Esophagus muscularis mucosa (tissue), 4 donors: ENCODE measurements at regions of chr3 and their contacts with region 1.

Region 1: DNA sequence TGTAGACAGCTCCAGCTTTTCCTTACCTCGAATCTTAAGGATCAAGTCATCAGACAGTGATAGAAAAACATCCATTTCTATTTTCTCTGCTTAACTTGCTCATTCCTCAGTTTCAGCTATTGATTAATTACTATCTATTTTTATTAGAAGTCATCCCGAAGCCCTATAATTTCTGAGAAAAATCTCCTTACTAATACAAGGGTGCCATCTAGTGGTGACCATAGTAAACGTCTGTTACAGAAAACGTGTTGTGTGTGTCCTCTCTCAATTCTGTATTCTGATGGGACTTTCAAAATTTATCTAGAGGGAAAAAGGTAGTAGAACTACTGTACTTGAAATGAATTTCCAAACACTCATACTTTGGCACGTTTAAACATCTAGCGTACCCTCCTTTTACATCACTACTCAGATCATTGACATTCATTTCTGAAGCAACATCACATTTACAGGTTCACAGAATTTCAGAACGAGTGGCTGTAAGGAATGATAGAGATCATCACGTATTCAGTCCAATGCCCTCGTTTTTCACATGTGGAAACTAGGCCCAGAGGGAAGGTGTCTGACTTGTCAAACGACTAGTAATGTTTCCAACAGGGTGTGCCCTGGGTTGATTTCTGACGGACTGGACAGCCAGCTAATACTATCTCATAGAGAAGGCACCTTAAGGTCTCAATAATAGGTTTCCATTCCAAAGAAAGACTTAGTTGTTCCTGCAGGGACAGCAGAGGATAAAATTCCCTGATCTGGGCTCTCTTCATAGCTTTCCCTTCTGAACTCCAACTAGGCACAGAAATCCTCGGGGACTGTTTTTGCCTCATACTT is 25.6 kb downstream of the HACD2 start:
- DNase-seq: no peak
- H3K4me3 ChIP-seq: no peak overlapping the region
- H3K27ac ChIP-seq: no peak overlapping the region
- H3K4me1 ChIP-seq: peaks cover 0 to 17% (median 5%) of the 10 kb centered on the region in 4 donors
- H3K27me3 ChIP-seq: no peaks in the 10 kb centered on the region
- CTCF ChIP-seq: peak; percentile 73 to 79 (median 74)
- EP300 ChIP-seq: no peak
- POLR2A ChIP-seq: no peak

Region 2: DNA sequence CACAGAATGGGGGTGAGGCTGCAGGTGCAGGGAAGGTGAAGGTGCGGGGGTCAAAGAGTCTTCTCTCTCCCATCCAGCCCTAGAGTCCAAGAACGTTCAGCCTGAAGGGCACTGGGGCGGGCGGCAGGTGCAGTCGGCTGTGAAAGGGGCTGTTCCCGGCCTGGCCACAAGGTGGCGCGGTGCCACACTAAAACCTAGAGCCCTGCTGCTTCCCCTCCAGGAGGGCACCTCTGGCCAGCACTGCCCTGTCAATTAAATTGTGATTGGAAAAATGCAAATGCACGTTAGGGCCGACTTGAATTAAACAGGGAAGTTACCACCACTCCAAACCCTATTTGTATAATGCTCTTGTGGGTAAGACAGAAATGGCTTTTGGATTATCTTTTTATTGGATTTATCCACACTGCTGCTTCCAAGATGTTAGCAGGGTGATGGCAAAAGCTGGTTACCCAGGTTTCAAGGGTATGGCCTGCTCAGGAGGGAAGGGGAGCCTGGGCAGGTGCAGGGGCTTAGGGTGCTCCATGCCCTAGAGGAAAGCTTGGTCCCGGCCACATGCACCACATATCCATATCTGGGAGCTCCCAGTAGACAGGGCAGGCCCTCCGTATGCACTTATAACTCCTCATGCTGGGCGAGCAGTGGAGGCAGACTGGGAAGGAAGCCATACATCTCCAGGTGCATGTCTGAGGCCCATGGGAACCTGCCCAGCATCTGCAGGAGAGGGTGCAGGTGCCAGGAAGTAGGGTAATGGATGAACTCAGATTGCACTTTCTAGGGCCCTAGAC is 230.2 kb before region 1 on chr3:
- intact Hi-C with region 1: loop called (anchors 2 kb)
- DNase-seq: peak; percentile 94
- H3K4me3 ChIP-seq: no peak overlapping the region
- H3K27ac ChIP-seq: peak overlapping the region; percentile 77 to 88 (median 83)
- H3K4me1 ChIP-seq: peaks cover 65 to 99% (median 88%) of the 10 kb centered on the region in 4 donors
- H3K27me3 ChIP-seq: no peaks in the 10 kb centered on the region
- CTCF ChIP-seq: peak; percentile 94 to 97 (median 95)
- EP300 ChIP-seq: no peak
- POLR2A ChIP-seq: no peak

Region 3: DNA sequence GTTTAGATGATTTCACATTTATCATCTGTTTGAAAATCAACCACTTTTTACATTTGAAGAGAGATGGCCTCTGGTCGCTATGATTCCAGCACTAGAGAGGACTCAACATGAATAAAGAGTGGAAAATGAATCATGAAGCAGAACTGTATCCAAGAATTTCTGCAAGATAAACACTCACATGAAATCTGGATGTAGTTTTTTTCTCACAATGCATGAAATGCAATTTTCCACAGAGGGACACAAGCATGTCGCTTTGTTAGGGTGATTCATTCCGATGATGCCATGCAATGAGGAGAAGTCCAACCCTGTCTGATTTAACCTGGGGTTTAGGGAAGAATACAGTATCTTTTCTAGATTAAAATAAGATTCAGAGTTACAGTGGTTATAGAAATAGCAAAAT is 59.9 kb before region 1 on chr3:
- intact Hi-C with region 1: loop called (anchors 5 kb)
- DNase-seq: no peak
- H3K4me3 ChIP-seq: no peak overlapping the region
- H3K27ac ChIP-seq: peak overlapping the region; percentile 34 to 60 (median 44)
- H3K4me1 ChIP-seq: peaks cover 0 to 40% (median 35%) of the 10 kb centered on the region in 4 donors
- H3K27me3 ChIP-seq: no peaks in the 10 kb centered on the region
- CTCF ChIP-seq: no peak
- EP300 ChIP-seq: no peak
- POLR2A ChIP-seq: no peak

Region 4: GRCh38 chr3:124303305-124303910 is 744.2 kb after region 1 on chr3:
- intact Hi-C with region 1: no loop called
- DNase-seq: peak; percentile 12
- H3K4me3 ChIP-seq: no peak overlapping the region
- H3K27ac ChIP-seq: no peak overlapping the region
- H3K4me1 ChIP-seq: peaks cover 0 to 6% (median 0%) of the 10 kb centered on the region in 4 donors
- H3K27me3 ChIP-seq: no peaks in the 10 kb centered on the region
- CTCF ChIP-seq: no peak
- EP300 ChIP-seq: no peak
- POLR2A ChIP-seq: no peak